OCI-LY7 (cell line): ENCODE measurements at regions of chr10 and their contacts with region 1.

Region 1: GRCh38 chr10:62816331-62817120 is at the start of gene EGR2:
- DNase-seq: peak; percentile 95
- H3K4me3 ChIP-seq: peak within 1 kb of the TSS; percentile 74
- H3K27ac ChIP-seq: peak within 1 kb of the TSS; percentile 60
- H3K4me1 ChIP-seq: peaks cover 16% of the 10 kb centered on the region
- CTCF ChIP-seq: no peak
- total RNA-seq, gene EGR2: 0.08 TPM in 1 of 2 replicates, not detected in the other

Region 2: GRCh38 chr10:62492012-62492869 is 324.3 kb before region 1 on chr10:
- CTCF ChIA-PET with region 1: interaction called, 3 read pairs
- POLR2A ChIA-PET with region 1: no interaction called
- intact Hi-C with region 1: loop called (anchors 5 kb)
- DNase-seq: peak; percentile 72
- H3K4me3 ChIP-seq: no peak overlapping the region
- H3K27ac ChIP-seq: no peak overlapping the region
- H3K4me1 ChIP-seq: peaks cover 3% of the 10 kb centered on the region
- CTCF ChIP-seq: peak; percentile 93

Region 3: DNA sequence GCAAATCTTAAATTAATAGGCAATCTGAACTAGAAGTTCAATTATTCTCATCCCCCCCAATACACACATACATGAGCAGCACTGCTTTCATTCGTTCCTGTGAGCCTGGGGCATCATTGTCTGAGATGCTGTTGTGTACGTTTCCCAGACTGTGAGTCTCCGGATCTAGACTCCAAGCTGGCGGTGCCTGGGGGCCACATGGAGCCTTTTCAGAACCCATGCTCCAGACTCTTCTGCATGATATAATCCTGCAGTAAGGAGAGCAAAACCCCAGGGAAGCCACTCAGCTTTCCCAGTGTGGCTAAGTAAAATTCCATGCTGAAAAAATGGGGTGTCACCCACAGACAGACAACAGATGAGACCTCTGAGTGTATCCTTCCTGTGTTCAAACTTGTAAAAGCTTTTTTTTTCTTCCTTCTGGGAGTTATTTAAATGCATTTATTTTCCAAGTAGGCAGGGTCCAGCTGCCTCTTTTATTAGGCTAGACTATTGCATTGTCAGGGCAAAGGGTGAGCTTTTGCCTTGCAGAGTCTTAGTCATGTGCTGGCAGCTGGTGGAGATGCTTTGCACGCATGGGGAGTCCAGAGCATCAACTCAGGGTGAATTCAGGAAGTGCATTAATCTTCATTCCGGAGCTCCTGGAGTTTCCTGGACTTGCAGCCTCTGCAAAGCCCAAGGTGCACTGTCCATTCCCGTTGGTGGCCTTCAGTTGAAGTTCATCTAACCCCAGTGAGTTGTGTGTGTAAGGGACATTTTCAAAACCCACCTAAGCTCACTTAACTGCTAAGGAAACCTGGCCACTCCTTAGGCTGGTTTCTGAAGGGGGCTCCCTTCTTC is 197.7 kb before region 1 on chr10:
- CTCF ChIA-PET with region 1: interaction called, 4 read pairs
- POLR2A ChIA-PET with region 1: interaction called, 12 read pairs
- intact Hi-C with region 1: no loop called
- DNase-seq: peak; percentile 76
- H3K4me3 ChIP-seq: no peak overlapping the region
- H3K27ac ChIP-seq: no peak overlapping the region
- H3K4me1 ChIP-seq: peaks cover 46% of the 10 kb centered on the region
- CTCF ChIP-seq: no peak

Region 4: GRCh38 chr10:62804356-62805230 is 11.9 kb before region 1 on chr10 and contains the start of gene ADO:
- CTCF ChIA-PET with region 1: interaction called, 6 read pairs
- POLR2A ChIA-PET with region 1: interaction called, 54 read pairs
- intact Hi-C with region 1: no loop called
- DNase-seq: peak; percentile 89
- H3K4me3 ChIP-seq: peak within 1 kb of the TSS; percentile 88
- H3K27ac ChIP-seq: peak within 1 kb of the TSS; percentile 66
- H3K4me1 ChIP-seq: peaks cover 39% of the 10 kb centered on the region
- CTCF ChIP-seq: no peak
- total RNA-seq, gene ADO: 33.1 and 43.1 TPM in 2 replicates

Region 5: GRCh38 chr10:63027531-63027930 is 211.0 kb after region 1 on chr10:
- CTCF ChIA-PET with region 1: no interaction called
- POLR2A ChIA-PET with region 1: no interaction called
- intact Hi-C with region 1: no loop called
- DNase-seq: no peak
- H3K4me3 ChIP-seq: no peak overlapping the region
- H3K27ac ChIP-seq: no peak overlapping the region
- H3K4me1 ChIP-seq: no peaks in the 10 kb centered on the region
- CTCF ChIP-seq: no peak

Region 6: GRCh38 chr10:63157845-63158624 is 341.5 kb after region 1 on chr10:
- CTCF ChIA-PET with region 1: no interaction called
- POLR2A ChIA-PET with region 1: no interaction called
- intact Hi-C with region 1: loop called (anchors 5 kb)
- DNase-seq: peak; percentile 87
- H3K4me3 ChIP-seq: no peak overlapping the region
- H3K27ac ChIP-seq: no peak overlapping the region
- H3K4me1 ChIP-seq: no peaks in the 10 kb centered on the region
- CTCF ChIP-seq: peak; percentile 96